ENCODE measurements at regions of chr3 and their contacts with region 1.

Region 1: GRCh38 chr3:182212479-182213076 is 500.9 kb downstream of the SOX2 start:
- DNase-seq: peak; percentile 97
- ATAC-seq: peak; percentile 99
- H3K4me3 ChIP-seq: no peak overlapping the region
- H3K27ac ChIP-seq: peak overlapping the region; percentile 35; the same call in 1 of the 2 replicates
- H3K4me1 ChIP-seq: peaks cover 24% of the 10 kb centered on the region
- H3K27me3 ChIP-seq: no peaks in the 10 kb centered on the region
- CTCF ChIP-seq: no peak

Region 2: DNA sequence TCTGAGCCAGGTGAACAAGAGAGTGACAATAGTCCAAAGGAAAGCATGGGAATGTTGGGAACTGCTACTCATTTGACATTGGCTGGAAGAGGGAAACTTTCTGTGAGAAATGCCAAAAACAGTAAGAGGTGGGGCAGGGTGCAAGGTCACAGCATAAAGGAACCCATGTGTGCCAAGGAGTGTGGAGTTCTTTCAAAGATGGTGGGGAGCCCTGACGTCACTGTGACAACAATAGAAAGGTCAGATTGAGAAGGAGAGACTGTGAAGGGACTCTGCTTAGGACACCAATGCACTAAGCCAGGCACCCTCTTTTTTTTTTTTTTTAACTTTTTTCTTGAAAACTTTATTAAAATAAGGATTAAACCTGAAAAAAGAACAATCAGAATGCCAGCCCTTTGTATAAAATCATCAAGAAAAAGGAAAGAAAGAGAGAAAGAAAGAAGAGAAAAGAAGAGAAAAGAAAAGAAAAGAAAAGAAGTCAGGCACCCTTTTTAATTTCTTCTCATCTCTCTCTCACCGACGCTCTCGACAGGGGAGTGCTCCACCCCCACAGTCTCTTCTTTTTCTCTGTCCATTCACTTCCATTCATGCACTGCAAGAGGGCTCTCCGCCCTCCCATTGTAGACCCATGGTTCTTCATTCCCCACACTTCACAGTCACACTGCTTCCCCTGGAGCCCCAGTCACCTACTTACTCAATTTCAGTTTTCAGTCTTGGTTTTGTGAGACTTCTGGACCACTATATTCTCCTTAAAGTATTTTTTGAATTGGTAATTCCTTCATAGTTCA is 246.4 kb before region 1 on chr3:
- CTCF ChIA-PET with region 1: no interaction called
- POLR2A ChIA-PET with region 1: no interaction called
- in situ Hi-C with region 1: no loop called
- intact Hi-C with region 1: no loop called
- DNase-seq: no peak
- ATAC-seq: no peak
- H3K4me3 ChIP-seq: no peak overlapping the region
- H3K27ac ChIP-seq: no peak overlapping the region
- H3K4me1 ChIP-seq: no peaks in the 10 kb centered on the region
- H3K27me3 ChIP-seq: no peaks in the 10 kb centered on the region
- CTCF ChIP-seq: no peak

Region 3: GRCh38 chr3:182182531-182182968 is 30.0 kb before region 1 on chr3:
- CTCF ChIA-PET with region 1: no interaction called
- POLR2A ChIA-PET with region 1: interaction called, 10 read pairs
- in situ Hi-C with region 1: no loop called
- intact Hi-C with region 1: no loop called
- DNase-seq: no peak
- ATAC-seq: no peak
- H3K4me3 ChIP-seq: no peak overlapping the region
- H3K27ac ChIP-seq: no peak overlapping the region
- H3K4me1 ChIP-seq: no peaks in the 10 kb centered on the region
- H3K27me3 ChIP-seq: no peaks in the 10 kb centered on the region
- CTCF ChIP-seq: no peak

Measured in Panc1 (cell line).